B cell (primary cell): ENCODE measurements at regions of chr15 and their contacts with region 1.

Region 1: GRCh38 chr15:86973376-86973775 is 893.7 kb downstream of the AGBL1 start:
- DNase-seq: no peak
- ATAC-seq: no peak
- H3K4me3 ChIP-seq: no peak overlapping the region
- H3K4me3 Mint-ChIP-seq: no peak overlapping the region
- H3K27ac ChIP-seq: no peak overlapping the region
- H3K27ac Mint-ChIP-seq: no peak overlapping the region
- H3K4me1 ChIP-seq: no peaks in the 10 kb centered on the region
- H3K4me1 Mint-ChIP-seq: no peaks in the 10 kb centered on the region
- H3K27me3 ChIP-seq: no peaks in the 10 kb centered on the region
- H3K27me3 Mint-ChIP-seq: no peaks in the 10 kb centered on the region
- CTCF ChIP-seq: no peak

Region 2: DNA sequence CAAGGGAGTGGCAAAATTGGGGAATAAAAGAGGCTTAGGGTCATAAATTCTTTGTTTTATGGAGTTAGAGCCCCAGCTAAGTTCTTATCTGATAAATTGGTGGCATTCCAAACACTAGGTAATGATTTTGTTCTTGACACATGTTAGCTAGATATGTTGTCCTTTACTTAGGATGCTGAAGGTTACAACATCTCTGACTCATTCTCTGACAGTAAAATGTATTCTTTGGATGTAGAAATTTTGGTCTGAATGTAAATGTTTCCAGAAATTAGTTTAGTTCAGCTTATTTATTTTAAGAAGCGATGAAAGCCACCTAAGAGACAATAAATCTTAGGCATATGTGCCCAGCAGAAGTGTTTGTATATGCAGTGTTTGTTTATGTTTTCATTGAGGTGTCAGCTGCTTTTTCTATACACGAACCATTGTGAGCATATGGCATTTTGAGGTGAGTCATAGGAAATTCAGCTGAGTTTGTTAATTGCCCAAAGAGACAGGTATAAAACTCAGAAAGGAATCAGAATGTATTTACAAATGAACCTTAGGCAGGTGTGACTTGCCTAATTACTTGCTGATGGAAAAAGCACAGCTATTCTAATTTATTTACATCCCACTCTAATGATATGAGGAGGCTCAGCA is 646.0 kb before region 1 on chr15:
- CTCF ChIA-PET with region 1: no interaction called
- POLR2A ChIA-PET with region 1: no interaction called
- intact Hi-C with region 1: no loop called
- DNase-seq: no peak
- ATAC-seq: no peak
- H3K4me3 ChIP-seq: no peak overlapping the region
- H3K4me3 Mint-ChIP-seq: no peak overlapping the region
- H3K27ac ChIP-seq: no peak overlapping the region
- H3K27ac Mint-ChIP-seq: no peak overlapping the region
- H3K4me1 ChIP-seq: no peaks in the 10 kb centered on the region
- H3K4me1 Mint-ChIP-seq: no peaks in the 10 kb centered on the region
- H3K27me3 ChIP-seq: no peaks in the 10 kb centered on the region
- H3K27me3 Mint-ChIP-seq: no peaks in the 10 kb centered on the region
- CTCF ChIP-seq: no peak

Region 3: GRCh38 chr15:86915811-86916331 is 57.5 kb before region 1 on chr15:
- CTCF ChIA-PET with region 1: no interaction called
- POLR2A ChIA-PET with region 1: no interaction called
- intact Hi-C with region 1: loop called (anchors 2 kb)
- DNase-seq: no peak
- ATAC-seq: no peak
- H3K4me3 ChIP-seq: no peak overlapping the region
- H3K4me3 Mint-ChIP-seq: no peak overlapping the region
- H3K27ac ChIP-seq: no peak overlapping the region
- H3K27ac Mint-ChIP-seq: no peak overlapping the region
- H3K4me1 ChIP-seq: no peaks in the 10 kb centered on the region
- H3K4me1 Mint-ChIP-seq: no peaks in the 10 kb centered on the region
- H3K27me3 ChIP-seq: no peaks in the 10 kb centered on the region
- H3K27me3 Mint-ChIP-seq: no peaks in the 10 kb centered on the region
- CTCF ChIP-seq: no peak